ENCODE measurements at regions of chr1 and their contacts with region 1.

Region 1: DNA sequence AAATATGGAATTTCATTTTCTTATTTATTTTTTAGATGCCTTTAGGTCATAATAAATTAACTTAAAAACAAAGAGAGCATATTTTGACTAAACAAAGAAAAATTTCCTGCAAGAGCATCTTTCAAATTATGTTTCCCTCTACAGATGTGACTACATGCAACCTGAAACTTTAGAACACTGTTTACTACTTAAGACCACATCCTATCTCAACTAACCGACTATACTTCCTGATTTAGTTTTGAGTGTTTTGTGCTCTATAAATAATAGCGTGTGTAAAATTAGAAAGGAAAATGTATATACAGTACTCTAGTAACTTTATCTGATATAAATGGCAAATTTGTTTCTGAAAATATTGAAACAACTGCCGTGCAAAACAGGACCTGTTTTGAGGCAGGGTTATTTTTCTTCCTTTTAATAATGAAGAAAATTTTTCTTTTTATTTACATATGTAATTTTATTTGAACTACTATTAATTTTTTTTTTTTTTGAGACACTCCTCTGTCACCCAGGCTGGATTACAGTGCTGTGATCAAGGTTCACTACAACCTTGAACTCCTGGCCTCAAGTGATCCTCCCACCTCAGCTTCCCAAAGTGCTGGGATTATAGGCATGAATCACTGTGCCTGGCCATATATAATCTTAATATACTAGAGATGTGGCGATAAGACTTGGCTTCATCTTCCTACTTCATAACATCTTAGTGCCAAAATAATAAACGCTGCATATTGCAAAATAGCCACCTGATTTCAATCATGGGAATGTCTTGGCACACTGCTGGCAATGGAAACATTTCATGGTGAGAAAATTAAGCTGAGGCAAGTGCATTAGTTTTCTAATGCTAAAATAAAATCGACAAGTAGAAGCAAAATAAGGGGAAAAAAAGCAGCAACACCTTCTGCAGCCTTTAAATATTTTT is 12.3 kb downstream of the ZRANB2 start:
- DNase-seq: no peak
- H3K4me3 ChIP-seq: no peak overlapping the region
- CTCF ChIP-seq: no peak

Region 2: GRCh38 chr1:71080739-71081696 is 12.4 kb after region 1 on chr1 and contains the start of gene ZRANB2:
- CTCF ChIA-PET with region 1: interaction called, 11 read pairs
- POLR2A ChIA-PET with region 1: no interaction called
- DNase-seq: peak; percentile 68
- H3K4me3 ChIP-seq: peak within 1 kb of the TSS; percentile 81
- CTCF ChIP-seq: peak; percentile 75

Region 3: DNA sequence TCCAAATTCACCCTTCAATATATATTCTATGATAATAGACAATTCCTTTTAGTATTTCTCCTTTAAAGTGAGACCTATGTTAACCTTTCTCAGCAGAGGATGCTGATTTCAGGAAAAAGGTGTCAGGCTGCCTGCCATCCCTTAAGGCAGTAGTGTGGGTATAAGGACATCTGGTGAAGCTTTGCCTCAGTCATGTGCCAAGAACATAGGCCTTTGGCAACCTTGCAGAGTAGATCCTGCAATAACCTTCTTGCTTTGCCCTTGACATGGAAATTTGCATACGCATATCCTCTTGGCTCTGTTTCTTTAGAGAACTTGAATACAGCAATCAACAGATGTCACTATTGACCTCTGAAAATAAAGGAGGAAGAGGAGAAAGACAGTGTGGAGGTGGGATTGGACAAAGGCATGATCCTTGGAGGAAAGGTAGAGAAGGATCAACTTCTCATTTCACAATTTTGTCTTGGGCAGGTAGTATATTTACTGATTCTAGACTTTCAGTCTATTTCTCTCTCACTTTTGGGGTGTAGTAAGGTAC is 33.3 kb after region 1 on chr1:
- CTCF ChIA-PET with region 1: no interaction called
- POLR2A ChIA-PET with region 1: no interaction called
- DNase-seq: no peak
- H3K4me3 ChIP-seq: no peak overlapping the region
- CTCF ChIP-seq: no peak